GM12878 (cell line): ENCODE measurements at regions of chr3 and their contacts with region 1.

Region 1: DNA sequence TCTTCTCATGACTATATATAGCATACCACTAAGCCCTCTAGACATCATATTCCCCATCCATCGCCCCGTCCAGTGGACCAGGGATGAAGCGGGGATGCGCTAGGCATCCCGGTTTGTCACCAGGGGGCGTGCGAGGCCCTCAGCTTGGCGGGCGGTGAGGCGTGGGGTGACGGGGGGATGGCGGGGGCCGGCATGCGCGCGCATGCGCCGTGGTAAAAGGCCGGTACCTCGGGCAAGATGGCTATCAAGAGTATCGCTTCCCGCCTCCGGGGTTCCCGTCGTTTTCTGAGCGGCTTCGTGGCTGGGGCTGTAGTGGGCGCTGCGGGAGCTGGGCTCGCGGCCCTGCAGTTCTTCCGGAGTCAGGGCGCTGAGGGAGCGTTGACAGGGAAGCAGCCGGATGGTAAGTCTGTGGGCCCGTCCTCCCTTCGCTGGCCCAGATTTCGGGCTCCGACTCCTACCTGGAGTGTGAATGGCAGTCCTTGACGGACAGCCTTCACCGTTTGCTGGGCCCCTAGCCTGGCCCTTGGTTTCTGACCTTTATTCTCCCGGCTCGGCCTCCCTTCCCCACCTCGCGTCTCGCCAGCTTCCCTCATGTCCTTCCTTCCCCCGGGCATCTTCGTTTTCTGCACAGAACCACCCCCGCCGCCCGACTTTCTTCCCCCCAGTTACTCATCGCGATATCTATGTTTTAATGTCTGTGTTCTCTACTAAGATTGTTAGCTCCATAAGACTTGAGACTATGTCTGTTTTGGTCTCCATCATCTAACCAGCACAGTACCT is at the start of gene EXOG:
- DNase-seq: peak; percentile 67
- ATAC-seq: peak; percentile 93
- H3K4me3 ChIP-seq: peak within 1 kb of the TSS; percentile 81
- H3K27ac ChIP-seq: peak within 1 kb of the TSS; percentile 82
- H3K4me1 ChIP-seq: no peaks in the 10 kb centered on the region
- H3K27me3 ChIP-seq: no peaks in the 10 kb centered on the region
- CTCF ChIP-seq: peak; percentile 81 to 96 (median 86)
- EP300 ChIP-seq: no peak
- POLR2A ChIP-seq: peak; percentile 77
- RAD21 ChIP-seq: peak; percentile 60
- polyA plus RNA-seq, gene EXOG: 7.8 to 8.6 TPM

Region 2: DNA sequence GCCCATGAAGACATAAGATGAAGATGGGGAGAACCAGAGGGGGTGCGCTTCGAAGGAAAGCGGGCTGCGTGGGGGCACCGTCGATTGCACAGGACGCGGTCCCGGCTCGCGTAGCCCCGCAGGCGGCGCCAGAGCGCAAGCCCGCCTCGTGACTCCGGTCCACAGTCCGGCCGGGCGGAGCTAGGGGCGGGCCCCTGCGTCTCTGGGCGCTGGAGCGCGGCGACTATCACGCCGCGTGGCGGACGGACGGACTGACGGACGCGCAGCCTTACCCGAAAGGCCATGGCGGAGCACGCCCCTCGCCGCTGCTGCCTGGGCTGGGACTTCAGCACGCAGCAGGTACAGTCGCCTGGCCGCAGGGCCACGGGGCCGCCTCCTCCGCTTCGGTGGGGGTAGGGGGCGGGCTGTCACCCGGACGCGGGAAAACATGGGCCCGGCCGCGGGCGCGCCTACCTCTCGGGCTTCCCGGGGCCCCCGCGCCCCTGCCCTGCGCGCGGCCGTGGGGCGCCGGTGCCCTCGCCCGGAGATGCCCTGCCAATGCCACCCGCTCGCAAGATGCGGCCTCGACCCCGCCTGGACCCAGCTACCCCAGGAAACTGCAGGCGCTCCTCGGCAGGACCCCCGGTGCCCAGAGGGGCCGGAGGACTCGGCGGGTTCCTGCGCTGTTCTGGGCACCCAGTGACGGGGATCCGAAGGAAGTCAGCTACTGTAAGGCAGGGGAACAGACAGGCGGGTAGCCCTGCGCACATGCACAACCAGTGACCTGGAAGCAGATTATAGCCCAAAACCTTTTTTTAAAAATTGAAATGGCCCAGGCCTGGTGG is 149.5 kb before region 1 on chr3 and contains the start of gene XYLB:
- CTCF ChIA-PET with region 1: interaction called, 11 read pairs
- POLR2A ChIA-PET with region 1: no interaction called
- RAD21 ChIA-PET with region 1: interaction called, 4 read pairs
- SMC1A ChIA-PET with region 1: interaction called, 3 read pairs
- in situ Hi-C with region 1: no loop called
- intact Hi-C with region 1: no loop called
- DNase-seq: peak; percentile 44
- ATAC-seq: peak; percentile 98
- H3K4me3 ChIP-seq: peak within 1 kb of the TSS; percentile 86
- H3K27ac ChIP-seq: peak within 1 kb of the TSS; percentile 42
- H3K4me1 ChIP-seq: no peaks in the 10 kb centered on the region; the same call in 1 of the 2 replicates
- H3K27me3 ChIP-seq: no peaks in the 10 kb centered on the region
- CTCF ChIP-seq: peak; percentile 84 to 89 (median 88)
- EP300 ChIP-seq: peak in 1 of 2 experiments; percentile 58; a peak in 1 of 4 replicates
- POLR2A ChIP-seq: peak; percentile 79
- RAD21 ChIP-seq: peak; percentile 53
- polyA plus RNA-seq, gene XYLB: 0.60 to 0.80 TPM

Region 3: GRCh38 chr3:38507120-38507519 is 10.8 kb after region 1 on chr3:
- CTCF ChIA-PET with region 1: interaction called, 20 read pairs
- POLR2A ChIA-PET with region 1: interaction called, 7 read pairs
- RAD21 ChIA-PET with region 1: interaction called, 8 read pairs
- SMC1A ChIA-PET with region 1: no interaction called
- in situ Hi-C with region 1: no loop called
- intact Hi-C with region 1: no loop called
- DNase-seq: peak; percentile 33
- ATAC-seq: peak; percentile 100
- H3K4me3 ChIP-seq: no peak overlapping the region
- H3K27ac ChIP-seq: no peak overlapping the region
- H3K4me1 ChIP-seq: peaks cover 3% of the 10 kb centered on the region; the same call in 1 of the 2 replicates
- H3K27me3 ChIP-seq: no peaks in the 10 kb centered on the region
- CTCF ChIP-seq: no peak
- EP300 ChIP-seq: peak; percentile 46 to 90; a peak in 2 of 4 replicates
- POLR2A ChIP-seq: no peak
- RAD21 ChIP-seq: no peak